SK-N-SH (cell line): ENCODE measurements at regions of chr6 and their contacts with region 1.

Region 1: GRCh38 chr6:161418463-161418945 is 144.6 kb upstream of the AGPAT4 start:
- DNase-seq: peak; percentile 61
- H3K4me3 ChIP-seq: no peak overlapping the region
- H3K27ac ChIP-seq: peak overlapping the region in 1 of 2 experiments; percentile 70; a peak in 2 of 4 replicates
- H3K4me1 ChIP-seq: peaks cover 0 to 22% of the 10 kb centered on the region in 2 experiments; a peak in 2 of 4 replicates
- H3K27me3 ChIP-seq: no peaks in the 10 kb centered on the region
- CTCF ChIP-seq: peak; percentile 82
- EP300 ChIP-seq: no peak
- RAD21 ChIP-seq: peak; percentile 85

Region 2: DNA sequence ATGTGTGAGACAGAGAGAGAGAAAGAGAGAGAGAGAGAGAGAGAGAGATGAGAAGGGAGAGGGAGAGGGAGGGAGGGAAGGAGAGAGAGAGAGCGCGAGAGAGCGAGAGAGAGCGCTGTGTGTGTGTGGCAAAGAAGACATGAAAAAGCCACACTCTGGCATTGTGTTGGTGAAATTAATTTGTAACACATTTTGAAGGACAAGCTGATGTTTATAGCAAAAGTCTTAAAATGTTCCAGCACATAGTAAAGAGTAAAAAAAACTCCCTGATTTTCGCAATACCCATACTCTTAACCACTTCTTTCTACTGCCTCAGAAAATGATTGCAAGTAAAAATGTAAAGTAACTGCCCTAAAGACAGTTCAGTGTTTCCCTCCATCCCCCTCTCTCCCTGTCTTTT is 1240.2 kb before region 1 on chr6:
- CTCF ChIA-PET with region 1: no interaction called
- POLR2A ChIA-PET with region 1: no interaction called
- DNase-seq: no peak
- H3K4me3 ChIP-seq: no peak overlapping the region
- H3K27ac ChIP-seq: no peak overlapping the region
- H3K4me1 ChIP-seq: no peaks in the 10 kb centered on the region
- H3K27me3 ChIP-seq: peaks cover 12% of the 10 kb centered on the region
- CTCF ChIP-seq: no peak
- EP300 ChIP-seq: no peak
- RAD21 ChIP-seq: no peak

Region 3: GRCh38 chr6:161333410-161333809 is 85.1 kb before region 1 on chr6:
- CTCF ChIA-PET with region 1: no interaction called
- POLR2A ChIA-PET with region 1: no interaction called
- DNase-seq: no peak
- H3K4me3 ChIP-seq: no peak overlapping the region
- H3K27ac ChIP-seq: no peak overlapping the region
- H3K4me1 ChIP-seq: no peaks in the 10 kb centered on the region
- H3K27me3 ChIP-seq: no peaks in the 10 kb centered on the region
- CTCF ChIP-seq: no peak
- EP300 ChIP-seq: no peak
- RAD21 ChIP-seq: no peak

Region 4: DNA sequence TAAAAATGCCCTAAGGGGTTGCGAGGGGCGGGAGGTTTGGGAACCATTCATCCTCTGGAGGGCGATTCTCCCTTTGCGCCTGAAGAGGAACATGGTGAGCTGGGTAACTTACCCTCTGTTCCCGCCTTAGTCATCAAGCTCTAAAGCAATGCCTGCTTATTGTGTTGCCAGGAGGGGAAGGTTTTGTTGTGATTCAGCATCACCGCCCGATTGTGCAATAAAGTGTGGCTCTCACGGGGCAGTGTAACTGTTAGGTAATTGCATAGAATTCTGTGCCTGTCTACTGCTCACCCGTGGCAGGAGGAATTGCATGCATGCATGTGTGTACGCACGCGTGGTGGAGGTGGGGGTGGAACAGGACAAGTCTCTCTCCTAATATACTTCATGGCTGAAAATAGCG is 49.2 kb before region 1 on chr6:
- CTCF ChIA-PET with region 1: no interaction called
- POLR2A ChIA-PET with region 1: no interaction called
- DNase-seq: no peak
- H3K4me3 ChIP-seq: no peak overlapping the region
- H3K27ac ChIP-seq: no peak overlapping the region; a peak in 1 of 4 replicates
- H3K4me1 ChIP-seq: no peaks in the 10 kb centered on the region
- H3K27me3 ChIP-seq: no peaks in the 10 kb centered on the region
- CTCF ChIP-seq: no peak
- EP300 ChIP-seq: no peak
- RAD21 ChIP-seq: no peak

Region 5: GRCh38 chr6:161393839-161394364 is 24.6 kb before region 1 on chr6:
- CTCF ChIA-PET with region 1: interaction called, 52 read pairs
- POLR2A ChIA-PET with region 1: no interaction called
- DNase-seq: peak; percentile 66
- H3K4me3 ChIP-seq: peak overlapping the region in 1 of 2 experiments; percentile 16; a peak in 1 of 4 replicates
- H3K27ac ChIP-seq: no peak overlapping the region
- H3K4me1 ChIP-seq: peaks cover 0 to 14% of the 10 kb centered on the region in 2 experiments; a peak in 1 of 4 replicates
- H3K27me3 ChIP-seq: 0 out of 2 replicates have a peak, but pooled peaks cover 4% of the 10 kb centered on the region
- CTCF ChIP-seq: peak; percentile 78
- EP300 ChIP-seq: no peak
- RAD21 ChIP-seq: peak; percentile 94

Region 6: DNA sequence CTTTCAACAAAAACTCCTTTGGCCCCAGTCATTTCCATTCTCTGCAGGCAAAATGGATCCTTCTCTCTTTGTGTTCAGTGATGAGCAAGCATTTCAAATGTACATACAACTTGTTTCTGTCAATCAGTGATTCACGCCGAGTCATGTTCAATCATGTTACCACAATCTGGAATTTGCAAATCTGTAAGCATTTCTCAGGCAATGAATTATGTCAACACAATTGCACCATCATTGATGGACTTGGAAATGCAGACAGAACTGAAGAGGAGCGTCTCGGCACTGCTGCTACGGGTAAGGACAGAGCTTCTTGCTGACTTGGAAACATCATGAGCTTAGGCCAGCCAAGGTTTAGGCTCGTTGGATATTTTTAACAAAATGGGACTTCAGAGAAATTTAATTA is 11.9 kb before region 1 on chr6:
- CTCF ChIA-PET with region 1: interaction called, 36 read pairs
- POLR2A ChIA-PET with region 1: no interaction called
- DNase-seq: no peak
- H3K4me3 ChIP-seq: no peak overlapping the region
- H3K27ac ChIP-seq: peak overlapping the region in 1 of 2 experiments; percentile 10; a peak in 1 of 4 replicates
- H3K4me1 ChIP-seq: peaks cover 0 to 6% of the 10 kb centered on the region in 2 experiments; a peak in 2 of 4 replicates
- H3K27me3 ChIP-seq: no peaks in the 10 kb centered on the region
- CTCF ChIP-seq: no peak
- EP300 ChIP-seq: peak in 1 of 2 experiments; percentile 64; a peak in 2 of 4 replicates
- RAD21 ChIP-seq: no peak

Region 7: DNA sequence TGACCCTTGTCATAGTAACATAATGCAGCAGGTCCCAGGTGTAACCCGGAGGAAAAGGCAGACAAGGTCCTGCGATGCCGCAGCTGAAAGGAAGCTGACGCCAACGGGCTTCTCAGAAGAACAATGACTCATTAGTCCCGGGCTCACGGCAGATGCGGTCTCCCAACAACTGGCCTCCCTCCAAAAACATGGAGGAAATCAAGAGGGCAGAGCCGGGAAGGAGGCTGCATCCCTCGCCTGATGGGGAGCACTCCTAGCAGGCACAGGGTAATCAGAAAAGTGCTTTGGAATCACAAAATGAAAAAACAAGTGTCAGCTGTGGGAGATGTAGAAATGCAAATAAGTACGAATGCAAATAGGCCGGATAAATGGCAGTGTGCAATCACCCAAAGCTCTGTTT is 20.6 kb after region 1 on chr6:
- CTCF ChIA-PET with region 1: interaction called, 41 read pairs
- POLR2A ChIA-PET with region 1: no interaction called
- DNase-seq: no peak
- H3K4me3 ChIP-seq: peak overlapping the region; percentile 14 to 31; a peak in 2 of 4 replicates
- H3K27ac ChIP-seq: peak overlapping the region; percentile 55 to 77
- H3K4me1 ChIP-seq: peaks cover 8 to 10% of the 10 kb centered on the region in 2 experiments; a peak in 2 of 4 replicates
- H3K27me3 ChIP-seq: no peaks in the 10 kb centered on the region
- CTCF ChIP-seq: no peak
- EP300 ChIP-seq: peak in 1 of 2 experiments; percentile 86; a peak in 2 of 4 replicates
- RAD21 ChIP-seq: no peak

Region 8: GRCh38 chr6:161498359-161498758 is 79.9 kb after region 1 on chr6:
- CTCF ChIA-PET with region 1: interaction called, 20 read pairs
- POLR2A ChIA-PET with region 1: no interaction called
- DNase-seq: peak; percentile 41
- H3K4me3 ChIP-seq: no peak overlapping the region
- H3K27ac ChIP-seq: no peak overlapping the region
- H3K4me1 ChIP-seq: no peaks in the 10 kb centered on the region; a peak in 1 of 4 replicates
- H3K27me3 ChIP-seq: no peaks in the 10 kb centered on the region
- CTCF ChIP-seq: peak; percentile 61
- EP300 ChIP-seq: no peak
- RAD21 ChIP-seq: peak; percentile 69

Region 9: GRCh38 chr6:161631676-161632194 is 213.2 kb after region 1 on chr6:
- CTCF ChIA-PET with region 1: no interaction called
- POLR2A ChIA-PET with region 1: no interaction called
- DNase-seq: peak; percentile 51
- H3K4me3 ChIP-seq: peak overlapping the region in 1 of 2 experiments; percentile 13; a peak in 1 of 4 replicates
- H3K27ac ChIP-seq: peak overlapping the region; percentile 81 to 86
- H3K4me1 ChIP-seq: peaks cover 7 to 9% of the 10 kb centered on the region in 2 experiments
- H3K27me3 ChIP-seq: no peaks in the 10 kb centered on the region
- CTCF ChIP-seq: no peak
- EP300 ChIP-seq: 0 out of 4 replicates have a peak, but pooled peaks of 1 of the 2 experiments have one; percentile 10
- RAD21 ChIP-seq: no peak

Region 10: DNA sequence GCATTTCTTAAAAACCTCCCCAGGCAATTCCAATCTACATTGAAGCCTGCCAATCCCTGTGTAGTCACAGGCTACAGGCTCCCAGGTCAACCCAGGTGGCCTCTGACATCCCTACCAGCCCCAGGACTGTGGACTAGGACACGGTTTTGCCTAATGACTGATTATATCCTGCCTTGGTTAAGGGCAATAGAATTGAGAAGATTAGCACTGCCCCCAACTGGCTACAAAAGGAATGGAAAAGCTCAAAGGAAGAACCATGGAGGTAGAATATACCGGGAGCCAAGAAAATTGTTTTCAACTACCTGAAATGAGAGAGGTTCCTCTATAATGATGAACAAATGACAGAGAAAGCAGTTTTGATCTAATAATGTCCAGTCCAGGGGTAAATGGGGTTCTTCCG is 276.5 kb after region 1 on chr6:
- CTCF ChIA-PET with region 1: interaction called, 11 read pairs
- POLR2A ChIA-PET with region 1: no interaction called
- DNase-seq: no peak
- H3K4me3 ChIP-seq: no peak overlapping the region
- H3K27ac ChIP-seq: no peak overlapping the region
- H3K4me1 ChIP-seq: no peaks in the 10 kb centered on the region
- H3K27me3 ChIP-seq: no peaks in the 10 kb centered on the region
- CTCF ChIP-seq: peak; percentile 66
- EP300 ChIP-seq: no peak
- RAD21 ChIP-seq: peak; percentile 65